Activated CD8-positive, alpha-beta T cell treated with anti-CD3 and anti-CD28 coated beads for 36 hours (primary cell): ENCODE measurements at regions of chr15 and their contacts with region 1.

Region 1: DNA sequence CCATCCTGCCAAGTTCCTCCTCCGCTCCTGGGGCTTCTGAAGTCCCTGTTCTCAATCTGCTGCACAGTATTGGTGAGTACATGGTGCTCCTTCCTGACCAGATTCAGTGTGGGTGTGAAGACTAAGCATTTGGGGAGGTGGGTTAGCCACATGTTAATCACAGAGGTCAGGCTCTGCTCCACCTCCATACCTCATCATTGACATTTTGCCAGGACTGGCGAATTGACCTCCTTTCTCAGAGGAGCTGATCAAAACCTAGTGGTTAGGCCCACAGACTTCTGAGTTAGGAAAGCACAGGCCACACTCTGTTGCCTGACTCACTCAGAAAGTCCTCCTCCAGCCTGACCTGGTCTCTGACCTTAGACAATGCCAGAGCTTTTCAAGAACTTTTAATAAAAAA is 8.4 kb upstream of the RPS17 start:
- DNase-seq: peak; percentile 62
- ATAC-seq: peak; percentile 80
- H3K4me3 Mint-ChIP-seq: no peak overlapping the region
- H3K27ac Mint-ChIP-seq: no peak overlapping the region
- H3K4me1 Mint-ChIP-seq: peaks cover 5% of the 10 kb centered on the region
- H3K27me3 Mint-ChIP-seq: no peaks in the 10 kb centered on the region
- CTCF ChIP-seq: no peak

Region 2: DNA sequence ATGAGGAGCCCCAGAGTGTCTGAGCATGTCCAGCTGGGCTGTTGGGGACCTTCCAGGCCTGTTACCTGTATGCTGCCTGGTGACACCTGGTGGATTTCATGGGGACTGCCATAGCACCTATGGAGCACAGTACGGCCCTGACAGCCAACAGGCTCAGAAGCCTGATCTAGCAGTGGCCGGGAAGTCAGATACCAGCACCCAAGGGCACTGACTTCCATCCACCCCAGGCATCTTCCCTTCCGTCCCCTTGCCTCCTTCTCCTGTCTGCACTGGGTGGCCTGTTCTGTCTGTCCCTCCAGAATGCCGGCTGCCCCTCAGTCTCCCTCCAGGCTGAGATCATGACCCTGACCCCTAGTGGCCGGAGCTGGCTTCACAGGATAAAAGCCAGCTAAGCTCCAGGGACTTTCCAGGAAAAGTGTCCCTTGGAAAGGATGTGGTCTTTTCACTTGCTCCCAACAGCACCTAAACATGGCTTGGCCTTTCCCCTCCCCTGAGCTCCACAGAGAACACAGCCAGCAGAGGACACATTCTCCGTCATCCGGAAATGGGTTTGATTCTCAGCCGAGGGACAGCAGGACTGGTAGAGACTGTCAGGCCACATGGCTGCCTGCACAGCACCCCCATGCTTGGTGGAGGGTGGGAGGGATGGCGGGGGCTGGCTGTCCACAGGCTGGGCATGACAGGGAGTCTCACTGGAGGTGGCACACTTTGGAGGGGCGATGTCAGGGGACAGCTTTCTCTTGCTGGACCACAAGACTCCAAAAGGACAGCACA is 17.9 kb before region 1 on chr15:
- CTCF ChIA-PET with region 1: interaction called, 11 read pairs
- POLR2A ChIA-PET with region 1: interaction called, 4 read pairs
- intact Hi-C with region 1: no loop called
- DNase-seq: peak; percentile 86
- ATAC-seq: peak; percentile 92
- H3K4me3 Mint-ChIP-seq: peak overlapping the region; percentile 40
- H3K27ac Mint-ChIP-seq: peak overlapping the region; percentile 63
- H3K4me1 Mint-ChIP-seq: peaks cover 15% of the 10 kb centered on the region
- H3K27me3 Mint-ChIP-seq: no peaks in the 10 kb centered on the region
- CTCF ChIP-seq: peak; percentile 76

Region 3: DNA sequence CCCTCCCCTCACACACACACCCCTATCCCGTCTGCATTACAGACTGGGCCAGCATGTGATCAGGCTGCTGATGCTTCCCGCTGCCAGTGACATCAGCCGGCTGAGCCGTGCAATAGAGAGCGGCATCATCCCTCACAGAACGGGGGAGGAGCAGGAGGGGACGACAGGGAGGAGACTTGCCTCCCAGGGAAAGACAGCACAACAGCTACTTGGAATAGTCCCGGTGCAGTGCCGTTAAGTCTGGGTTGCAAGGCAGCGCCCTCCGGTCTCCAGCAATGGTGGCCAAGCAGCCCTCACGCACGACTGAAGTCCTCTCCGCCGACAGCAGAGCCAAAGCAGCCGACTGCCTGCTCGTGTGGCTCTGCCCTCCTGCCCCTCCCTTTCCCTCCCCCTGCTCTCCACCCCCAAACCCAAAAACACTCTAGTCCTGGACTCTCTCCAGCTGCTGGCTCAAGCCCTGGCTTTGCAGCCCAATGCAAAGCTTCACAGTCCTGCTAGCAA is 23.1 kb after region 1 on chr15:
- CTCF ChIA-PET with region 1: no interaction called
- POLR2A ChIA-PET with region 1: no interaction called
- intact Hi-C with region 1: no loop called
- DNase-seq: peak; percentile 3
- ATAC-seq: peak; percentile 37
- H3K4me3 Mint-ChIP-seq: no peak overlapping the region
- H3K27ac Mint-ChIP-seq: no peak overlapping the region
- H3K4me1 Mint-ChIP-seq: no peaks in the 10 kb centered on the region
- H3K27me3 Mint-ChIP-seq: peaks cover 17% of the 10 kb centered on the region
- CTCF ChIP-seq: no peak

Region 4: GRCh38 chr15:82613747-82614146 is 65.0 kb after region 1 on chr15:
- CTCF ChIA-PET with region 1: no interaction called
- POLR2A ChIA-PET with region 1: no interaction called
- intact Hi-C with region 1: no loop called
- DNase-seq: no peak
- ATAC-seq: no peak
- H3K4me3 Mint-ChIP-seq: no peak overlapping the region
- H3K27ac Mint-ChIP-seq: no peak overlapping the region
- H3K4me1 Mint-ChIP-seq: no peaks in the 10 kb centered on the region
- H3K27me3 Mint-ChIP-seq: no peaks in the 10 kb centered on the region
- CTCF ChIP-seq: no peak